BJ (cell line): ENCODE measurements at regions of chr16 and their contacts with region 1.

Region 1: DNA sequence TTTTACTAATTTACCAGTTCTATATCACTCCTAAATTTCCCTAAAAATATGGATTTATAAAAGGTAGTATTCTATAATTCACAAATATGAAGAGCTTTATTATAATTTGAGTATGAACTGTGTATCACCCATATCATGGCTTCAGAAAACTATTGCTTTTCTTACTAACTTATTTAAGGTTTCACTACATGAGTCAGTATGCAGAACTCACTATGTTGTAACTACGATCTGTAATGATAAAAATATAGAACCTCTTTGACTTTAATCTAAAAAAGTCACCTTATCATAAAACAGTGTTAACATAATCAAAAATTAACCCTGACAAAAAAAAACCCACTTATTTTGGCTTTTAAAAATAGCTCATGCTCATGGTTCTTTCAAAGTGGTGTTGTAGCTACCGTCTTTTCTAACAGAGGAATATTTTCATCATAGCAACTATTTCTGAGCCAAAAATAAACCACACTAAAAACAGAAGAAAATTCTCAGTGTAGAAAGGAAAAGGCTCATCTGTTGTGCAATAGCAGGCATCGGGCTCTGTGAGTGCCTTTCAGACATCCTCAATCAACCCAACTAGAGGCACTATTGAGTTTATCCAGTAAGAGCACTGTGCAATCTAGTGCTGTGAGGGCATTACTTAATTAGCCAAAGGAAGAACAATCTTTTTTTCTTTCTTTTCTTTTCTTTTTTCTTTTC is 42.1 kb downstream of the ITGAM start:
- DNase-seq: no peak
- H3K4me3 ChIP-seq: no peak overlapping the region
- H3K27me3 ChIP-seq: no peaks in the 10 kb centered on the region
- CTCF ChIP-seq: no peak

Region 2: DNA sequence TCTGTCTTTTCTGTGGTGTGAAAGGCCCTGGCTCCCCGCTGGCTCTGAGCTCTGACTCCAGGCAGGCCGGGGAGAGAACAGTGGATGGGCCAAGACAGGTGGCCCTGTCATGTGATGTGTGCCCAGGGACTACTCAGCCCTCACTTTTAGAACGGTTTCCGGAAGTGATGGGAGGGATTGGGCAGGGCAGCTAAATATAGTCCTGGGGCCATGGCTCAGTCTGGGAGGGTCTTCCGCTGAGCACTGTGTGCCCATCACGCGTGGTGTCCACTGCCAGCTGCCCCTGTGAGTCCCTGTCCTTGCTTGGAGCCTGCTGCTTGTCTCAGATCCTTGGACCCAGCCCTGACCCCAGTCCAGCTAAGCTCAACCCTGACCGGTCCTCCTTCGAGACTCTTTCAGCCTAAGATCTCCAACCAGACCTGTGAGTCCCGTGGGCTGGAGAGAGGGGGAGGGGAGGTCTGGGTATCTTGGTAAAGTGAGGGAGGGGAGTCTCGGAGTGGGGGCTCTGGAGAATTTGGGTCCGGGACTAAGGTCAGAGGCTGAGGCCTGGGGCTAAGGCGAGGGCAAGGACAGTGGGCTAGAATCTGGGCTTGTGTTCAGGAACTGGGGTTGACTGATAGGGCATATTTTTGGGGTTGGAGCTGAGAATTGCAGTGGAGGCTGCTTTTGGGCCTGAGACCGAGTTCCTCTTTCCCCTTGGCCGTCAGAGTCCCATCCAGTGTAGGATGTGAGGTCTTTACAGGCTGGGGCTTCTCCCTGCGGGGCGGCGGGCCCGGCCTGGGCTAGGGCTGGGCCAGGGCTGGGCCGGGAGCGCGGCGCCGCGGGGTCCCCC is 87.8 kb before region 1 on chr16 and contains the start of gene TRIM72:
- CTCF ChIA-PET with region 1: no interaction called
- POLR2A ChIA-PET with region 1: interaction called, 20 read pairs
- DNase-seq: no peak
- H3K4me3 ChIP-seq: peak within 1 kb of the TSS; percentile 43
- H3K27me3 ChIP-seq: peaks cover 28% of the 10 kb centered on the region
- CTCF ChIP-seq: no peak
- polyA plus RNA-seq, gene TRIM72: not detected in 2 replicates

Region 3: DNA sequence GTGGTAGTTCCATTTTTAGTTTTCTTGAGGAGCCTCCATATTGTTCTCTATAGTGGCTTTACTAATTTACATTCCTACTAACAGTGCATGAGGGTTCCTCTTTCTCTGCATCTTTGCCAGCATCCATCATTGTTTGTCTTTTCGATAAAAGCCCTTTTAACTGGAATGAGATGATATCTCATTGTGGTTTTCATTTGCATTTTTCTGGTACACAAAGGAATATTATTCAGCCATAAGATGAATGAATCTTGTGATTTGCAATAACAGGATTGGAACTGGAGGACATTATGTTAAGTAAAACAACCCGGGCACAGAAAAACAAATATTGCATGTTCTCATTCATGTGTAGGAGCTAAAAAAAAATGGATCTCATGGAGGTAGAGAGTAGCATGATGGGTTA is 10.5 kb before region 1 on chr16:
- CTCF ChIA-PET with region 1: no interaction called
- POLR2A ChIA-PET with region 1: no interaction called
- DNase-seq: no peak
- H3K4me3 ChIP-seq: no peak overlapping the region
- H3K27me3 ChIP-seq: no peaks in the 10 kb centered on the region; the same call in 1 of the 2 replicates
- CTCF ChIP-seq: no peak